ENCODE measurements at regions of chr3 and their contacts with region 1.

Region 1: DNA sequence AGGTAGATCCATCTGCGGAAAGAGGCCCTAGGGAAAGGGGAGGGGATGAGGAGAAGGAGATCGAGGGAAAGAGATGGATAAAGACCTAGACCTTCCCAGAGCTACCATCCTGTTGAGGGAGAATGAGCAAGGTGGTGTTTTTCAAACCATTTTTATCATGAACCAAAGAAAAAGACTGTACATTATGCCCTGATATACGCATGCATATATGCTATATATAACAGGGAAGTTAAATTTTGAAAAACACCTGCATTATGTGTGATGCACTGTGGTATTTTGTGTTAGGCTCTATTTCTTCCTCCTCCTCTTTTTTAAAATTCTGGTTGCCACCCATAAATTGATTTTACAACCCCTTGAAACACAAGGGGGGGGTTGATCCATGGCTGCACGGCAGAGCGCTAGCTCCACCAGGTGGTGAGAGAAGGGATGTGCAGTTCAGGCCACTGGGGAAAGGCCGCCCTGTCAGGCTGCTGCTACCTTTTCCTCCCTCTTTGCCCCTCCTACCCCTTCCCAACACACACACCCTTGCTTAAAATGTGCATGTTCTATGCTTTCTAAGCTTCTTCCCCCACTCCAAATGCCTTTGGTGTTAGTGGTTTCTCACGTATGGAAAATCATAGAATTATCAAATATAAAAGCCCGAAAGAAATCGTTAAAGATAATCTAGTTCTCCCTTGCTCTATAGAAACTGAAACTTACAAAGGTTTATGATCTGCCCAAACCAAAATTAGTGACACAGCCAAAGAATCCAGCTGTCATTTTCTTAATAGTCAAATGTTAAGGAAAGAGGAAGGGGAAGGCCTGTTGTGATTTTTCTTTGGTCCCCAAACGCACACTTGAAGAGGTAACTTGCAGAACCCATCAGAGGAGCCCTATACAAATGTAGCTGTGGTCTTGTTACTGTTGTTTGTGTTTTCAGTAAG is 262.0 kb upstream of the UMPS start:
- DNase-seq: peak; percentile 24
- H3K4me3 ChIP-seq: no peak overlapping the region
- H3K27ac ChIP-seq: no peak overlapping the region
- H3K4me1 ChIP-seq: no peaks in the 10 kb centered on the region
- H3K27me3 ChIP-seq: peaks cover 3% of the 10 kb centered on the region
- CTCF ChIP-seq: peak; percentile 96 to 99

Region 2: GRCh38 chr3:124014366-124014942 is 453.8 kb before region 1 on chr3:
- CTCF ChIA-PET with region 1: no interaction called
- dilution Hi-C with region 1: no loop called
- in situ Hi-C with region 1: no loop called
- intact Hi-C with region 1: loop called (anchors 2 kb)
- DNase-seq: no peak
- H3K4me3 ChIP-seq: no peak overlapping the region
- H3K27ac ChIP-seq: no peak overlapping the region
- H3K4me1 ChIP-seq: no peaks in the 10 kb centered on the region
- H3K27me3 ChIP-seq: peaks cover 5% of the 10 kb centered on the region
- CTCF ChIP-seq: no peak

Region 3: GRCh38 chr3:124351430-124352148 is 116.7 kb before region 1 on chr3:
- CTCF ChIA-PET with region 1: no interaction called
- dilution Hi-C with region 1: loop called (anchors 5 kb)
- in situ Hi-C with region 1: loop called (anchors 5 kb)
- intact Hi-C with region 1: loop called (anchors 1 kb)
- DNase-seq: peak; percentile 28
- H3K4me3 ChIP-seq: no peak overlapping the region
- H3K27ac ChIP-seq: no peak overlapping the region
- H3K4me1 ChIP-seq: no peaks in the 10 kb centered on the region
- H3K27me3 ChIP-seq: peaks cover 2% of the 10 kb centered on the region
- CTCF ChIP-seq: peak; percentile 37 to 70

Region 4: GRCh38 chr3:124358156-124358555 is 110.1 kb before region 1 on chr3:
- CTCF ChIA-PET with region 1: no interaction called
- dilution Hi-C with region 1: loop called (anchors 5 kb)
- in situ Hi-C with region 1: no loop called
- intact Hi-C with region 1: no loop called
- DNase-seq: no peak
- H3K4me3 ChIP-seq: no peak overlapping the region
- H3K27ac ChIP-seq: no peak overlapping the region
- H3K4me1 ChIP-seq: no peaks in the 10 kb centered on the region
- H3K27me3 ChIP-seq: peaks cover 12% of the 10 kb centered on the region
- CTCF ChIP-seq: no peak

Region 5: DNA sequence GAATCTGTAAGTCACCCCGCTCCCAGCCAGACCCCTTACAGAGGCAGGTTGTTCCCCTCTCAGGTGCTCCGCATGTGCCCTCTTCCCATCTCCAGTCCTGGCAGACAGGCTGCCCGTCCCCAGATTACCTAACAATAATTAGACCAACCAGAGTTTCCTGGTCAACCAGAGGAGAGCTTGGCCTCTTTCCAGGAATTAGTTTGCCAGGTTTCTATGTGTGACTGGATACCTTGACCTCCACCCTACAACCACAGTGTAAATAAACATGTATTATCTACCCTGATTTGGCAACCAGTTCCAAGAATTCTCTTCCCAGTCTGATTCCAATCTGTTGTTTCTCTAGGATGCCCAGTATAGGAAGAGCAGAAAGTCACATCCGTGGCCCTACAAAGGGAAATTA is 84.0 kb after region 1 on chr3:
- CTCF ChIA-PET with region 1: no interaction called
- dilution Hi-C with region 1: no loop called
- in situ Hi-C with region 1: no loop called
- intact Hi-C with region 1: loop called (anchors 1 kb)
- DNase-seq: peak; percentile 37
- H3K4me3 ChIP-seq: no peak overlapping the region
- H3K27ac ChIP-seq: no peak overlapping the region
- H3K4me1 ChIP-seq: peaks cover 3% of the 10 kb centered on the region
- H3K27me3 ChIP-seq: no peaks in the 10 kb centered on the region
- CTCF ChIP-seq: no peak

Region 6: GRCh38 chr3:125220727-125221429 is 752.6 kb after region 1 on chr3:
- CTCF ChIA-PET with region 1: no interaction called
- dilution Hi-C with region 1: no loop called
- in situ Hi-C with region 1: no loop called
- intact Hi-C with region 1: no loop called
- DNase-seq: no peak
- H3K4me3 ChIP-seq: no peak overlapping the region
- H3K27ac ChIP-seq: no peak overlapping the region
- H3K4me1 ChIP-seq: no peaks in the 10 kb centered on the region
- H3K27me3 ChIP-seq: no peaks in the 10 kb centered on the region
- CTCF ChIP-seq: no peak

Measured in mammary epithelial cell (primary cell).